Activated CD4-positive, alpha-beta T cell treated with anti-CD3 and anti-CD28 coated beads, Interleukin-2, amount 10 ng/mL, durations not matched to agents 24 days and 14 days (primary cell): ENCODE measurements at regions of chr19 and their contacts with region 1.

Region 1: GRCh38 chr19:53365134-53365898 is at the start of gene ZNF525:
- DNase-seq: peak; percentile 99
- H3K4me3 Mint-ChIP-seq: peak within 1 kb of the TSS; percentile 95
- H3K27ac Mint-ChIP-seq: peak within 1 kb of the TSS; percentile 95
- H3K4me1 Mint-ChIP-seq: peaks cover 15% of the 10 kb centered on the region
- H3K27me3 Mint-ChIP-seq: no peaks in the 10 kb centered on the region
- total RNA-seq, gene ZNF525: 18.3 and 19.4 TPM in 2 replicates

Region 2: DNA sequence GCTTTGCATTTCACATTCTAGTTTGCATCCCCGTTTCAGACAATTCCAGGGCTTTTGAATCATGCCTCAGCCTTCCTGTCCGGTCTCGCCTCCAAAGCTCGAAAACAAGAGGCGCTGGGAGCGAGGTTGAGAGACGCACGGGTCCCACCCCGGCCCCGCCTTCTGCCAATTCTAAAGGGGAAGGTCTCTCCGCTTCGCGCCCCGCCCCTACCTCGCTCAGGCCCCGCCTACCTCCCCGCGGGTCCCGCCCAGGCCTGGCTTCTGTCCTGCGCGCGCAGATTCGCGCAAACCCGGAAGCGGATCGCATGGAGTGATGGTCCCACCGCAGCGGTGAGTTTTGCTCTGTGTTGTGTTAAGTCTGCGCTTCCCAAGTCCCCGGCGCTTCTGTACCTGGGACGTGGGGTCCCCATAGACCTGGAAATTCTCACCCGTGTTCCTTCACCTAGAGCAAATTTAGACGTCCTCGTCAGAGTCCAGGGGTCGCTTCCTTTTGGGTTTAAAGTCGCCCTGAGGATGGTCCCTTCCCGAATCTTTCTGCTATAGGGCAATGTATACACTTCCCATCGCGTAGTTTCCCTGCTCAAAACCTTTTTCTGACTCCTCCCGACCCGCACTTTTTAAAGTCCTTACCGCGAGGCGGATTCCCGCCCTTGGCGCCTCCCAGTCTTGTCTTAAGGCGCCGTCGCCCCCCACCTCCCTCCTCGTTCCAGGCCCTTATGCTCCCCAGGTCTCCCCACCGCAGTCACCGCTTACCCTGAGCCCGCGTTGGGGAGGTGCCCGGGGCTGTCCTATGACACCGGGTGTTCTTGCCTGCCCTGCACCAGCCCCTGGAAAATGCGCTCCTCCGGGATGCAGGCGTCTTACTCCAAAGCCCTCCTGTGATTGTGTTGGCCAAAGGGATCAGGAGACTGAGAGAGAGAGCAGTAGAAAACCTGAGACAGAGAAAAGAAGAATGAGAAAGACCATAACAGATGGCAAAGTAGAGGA is 31.6 kb before region 1 on chr19 and contains the start of gene ZNF845:
- intact Hi-C with region 1: loop called (anchors 1 kb)
- DNase-seq: peak; percentile 99
- H3K4me3 Mint-ChIP-seq: peak within 1 kb of the TSS; percentile 89
- H3K27ac Mint-ChIP-seq: peak within 1 kb of the TSS; percentile 88
- H3K4me1 Mint-ChIP-seq: peaks cover 11% of the 10 kb centered on the region
- H3K27me3 Mint-ChIP-seq: no peaks in the 10 kb centered on the region
- total RNA-seq, gene ZNF845: 6.1 and 6.4 TPM in 2 replicates

Region 3: DNA sequence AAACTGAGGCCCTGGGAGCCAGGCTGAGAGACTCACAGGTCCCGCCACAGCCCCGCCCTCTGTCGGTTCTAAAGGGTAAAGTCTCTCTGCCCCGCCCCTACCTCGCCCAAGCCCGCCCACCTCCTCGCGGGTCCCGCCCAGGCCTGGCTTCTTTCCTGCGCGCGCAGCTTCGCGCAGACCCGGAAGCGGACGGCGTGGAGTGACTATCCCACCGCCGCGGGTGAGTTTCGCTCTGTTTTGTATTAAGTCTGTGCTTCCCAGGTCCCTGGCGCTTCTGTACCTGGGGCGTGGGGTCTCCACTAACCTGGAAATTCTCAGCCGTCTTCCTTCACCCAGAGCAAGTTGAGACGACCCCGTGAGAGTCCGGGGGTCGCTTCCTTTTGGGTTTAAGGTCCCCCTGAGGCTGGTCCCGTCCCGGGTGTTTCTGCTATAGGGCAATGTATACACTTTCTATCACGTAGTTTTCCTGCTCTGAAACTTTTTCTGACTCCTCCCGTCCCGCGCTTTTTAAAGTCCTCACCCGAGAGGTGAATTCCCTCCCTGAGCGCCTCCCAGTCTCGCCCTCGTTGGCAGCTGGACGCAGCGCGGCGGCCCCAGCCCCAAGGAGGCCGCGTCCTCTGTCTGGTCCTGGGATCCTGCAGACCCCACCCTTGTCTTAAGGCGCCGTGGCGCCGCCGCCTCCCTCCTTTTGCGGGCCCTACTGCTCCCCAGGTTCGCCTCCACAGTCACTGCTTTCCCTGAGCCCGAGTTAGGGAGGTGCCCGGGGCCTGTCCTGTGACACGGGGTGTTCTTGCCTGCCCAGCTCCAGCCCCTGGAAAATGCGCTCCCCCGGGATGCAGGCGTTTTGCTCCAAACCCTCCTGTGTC is 29.9 kb after region 1 on chr19 and contains the start of gene ZNF765:
- intact Hi-C with region 1: loop called (anchors 1 kb)
- DNase-seq: peak; percentile 99
- H3K4me3 Mint-ChIP-seq: peak within 1 kb of the TSS; percentile 94
- H3K27ac Mint-ChIP-seq: peak within 1 kb of the TSS; percentile 93
- H3K4me1 Mint-ChIP-seq: peaks cover 16% of the 10 kb centered on the region
- H3K27me3 Mint-ChIP-seq: no peaks in the 10 kb centered on the region
- total RNA-seq, gene ZNF765: 11.0 and 11.8 TPM in 2 replicates